Heart left ventricle (tissue), 16 donors: ENCODE measurements at regions of chr10 and their contacts with region 1.

Region 1: GRCh38 chr10:43922335-43923280 is 273.9 kb upstream of the ZNF32 start:
- DNase-seq: no peak
- ATAC-seq: peak in 3 of 4 donors; percentile 28 to 68 (median 31)
- H3K4me3 ChIP-seq: no peak overlapping the region
- H3K27ac ChIP-seq: no peak overlapping the region
- H3K4me1 ChIP-seq: peaks cover 0 to 15% (median 0%) of the 10 kb centered on the region in 12 donors
- H3K27me3 ChIP-seq: no peaks in the 10 kb centered on the region
- CTCF ChIP-seq: peak in 5 of 12 donors; percentile 5 to 27 (median 23)
- POLR2A ChIP-seq: no peak

Region 2: GRCh38 chr10:44010873-44011602 is 88.4 kb after region 1 on chr10:
- intact Hi-C with region 1: loop called in 1 of 10 experiments (anchors 5 kb)
- DNase-seq: peak in 3 of 5 donors; percentile 40 to 65 (median 60)
- ATAC-seq: peak; percentile 81 to 91 (median 88)
- H3K4me3 ChIP-seq: no peak overlapping the region
- H3K27ac ChIP-seq: peak overlapping the region in 3 of 12 donors; percentile 28 to 53 (median 31)
- H3K4me1 ChIP-seq: peaks cover 0 to 46% (median 20%) of the 10 kb centered on the region in 12 donors
- H3K27me3 ChIP-seq: no peaks in the 10 kb centered on the region
- CTCF ChIP-seq: no peak
- POLR2A ChIP-seq: no peak

Region 3: GRCh38 chr10:44024356-44025116 is 101.9 kb after region 1 on chr10:
- intact Hi-C with region 1: no loop called
- DNase-seq: no peak
- ATAC-seq: no peak
- H3K4me3 ChIP-seq: no peak overlapping the region
- H3K27ac ChIP-seq: no peak overlapping the region
- H3K4me1 ChIP-seq: peaks cover 0 to 15% (median 2%) of the 10 kb centered on the region in 12 donors
- H3K27me3 ChIP-seq: no peaks in the 10 kb centered on the region
- CTCF ChIP-seq: no peak
- POLR2A ChIP-seq: no peak